ENCODE measurements at regions of chr3 and their contacts with region 1.

Region 1: DNA sequence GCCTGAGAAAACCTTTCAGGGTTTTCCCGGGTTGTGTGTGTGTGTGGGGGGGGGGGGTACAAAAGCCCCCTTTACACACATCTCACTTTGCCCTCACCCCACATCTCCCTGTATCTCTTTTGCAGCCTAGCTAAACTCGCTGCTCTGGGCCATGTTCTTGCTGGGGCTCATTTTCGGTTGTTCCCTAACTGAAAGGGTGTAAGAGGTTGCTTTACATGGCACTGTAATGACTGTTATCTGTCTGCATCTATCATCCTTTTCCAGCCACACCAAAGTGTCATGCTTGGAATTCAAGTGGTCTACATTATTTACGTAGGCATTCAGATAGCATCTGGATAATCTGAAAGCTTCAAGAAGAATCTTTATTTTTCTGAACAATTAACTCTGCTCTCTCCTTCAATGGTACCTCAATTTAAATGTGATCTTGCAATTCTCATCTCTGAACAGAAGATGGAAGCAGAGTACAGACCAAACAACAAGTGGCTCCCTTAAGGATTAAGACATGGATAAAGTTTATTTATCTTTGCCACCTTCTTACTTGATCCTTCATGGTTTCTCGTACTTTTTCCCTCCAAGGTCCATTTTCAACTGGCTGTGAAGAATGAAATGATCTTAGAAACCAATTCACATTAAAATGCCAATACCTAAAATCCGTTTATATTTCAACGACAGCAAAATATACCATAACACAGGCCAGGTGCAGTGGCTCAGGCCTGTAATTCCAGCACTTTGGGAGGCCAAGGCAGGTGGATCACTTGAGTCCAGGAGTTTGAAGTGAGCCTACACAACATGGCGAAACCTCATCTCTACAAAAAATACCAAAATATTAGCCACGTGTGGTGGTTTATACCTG is 34.9 kb downstream of the DCLK3 start:
- DNase-seq: no peak
- H3K4me3 ChIP-seq: no peak overlapping the region
- H3K27ac ChIP-seq: no peak overlapping the region
- H3K4me1 ChIP-seq: no peaks in the 10 kb centered on the region
- H3K27me3 ChIP-seq: no peaks in the 10 kb centered on the region
- CTCF ChIP-seq: peak; percentile 55 to 90 (median 78)
- POLR2A ChIP-seq: no peak

Region 2: DNA sequence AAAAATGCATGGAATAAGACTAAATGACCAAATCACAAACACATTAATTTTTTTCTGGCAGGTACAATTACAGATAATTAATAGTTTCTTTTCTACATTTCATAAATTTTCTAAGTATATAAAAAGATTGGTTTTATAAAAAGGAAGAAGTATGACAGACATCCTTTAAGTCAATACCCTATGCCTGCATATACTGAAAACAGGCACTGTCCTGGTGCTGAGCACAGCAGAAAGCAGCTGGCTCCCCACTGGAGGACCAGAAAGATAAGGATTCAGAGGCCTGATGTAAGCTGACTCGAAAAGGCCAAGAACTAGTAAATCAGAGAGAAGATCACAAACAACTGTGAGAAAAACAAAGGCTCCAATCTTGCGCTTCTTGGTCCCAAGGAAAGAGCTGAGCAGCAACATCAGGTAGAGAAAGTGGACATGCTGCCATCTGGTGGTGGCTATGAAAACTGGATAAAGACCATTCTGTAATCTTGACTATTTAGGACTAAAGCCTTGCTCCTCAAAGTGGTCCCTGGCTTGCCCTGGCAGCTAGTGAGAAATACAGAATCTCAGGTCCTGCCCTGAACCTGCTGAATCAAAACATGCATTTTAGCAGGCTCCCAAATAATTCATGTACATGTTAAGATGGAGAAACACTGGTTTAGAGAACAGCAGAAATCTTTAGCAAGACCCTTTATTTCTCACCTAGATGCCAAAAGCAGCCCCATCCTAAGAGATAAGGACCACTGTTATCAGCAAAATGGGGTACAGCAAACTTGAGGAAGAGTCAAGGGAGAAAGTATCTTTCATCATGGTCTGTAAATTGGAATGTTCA is 139.4 kb after region 1 on chr3:
- intact Hi-C with region 1: loop called in 1 of 2 experiments (anchors 5 kb)
- DNase-seq: peak; percentile 37 to 76 (median 49)
- H3K4me3 ChIP-seq: no peak overlapping the region
- H3K27ac ChIP-seq: no peak overlapping the region
- H3K4me1 ChIP-seq: no peaks in the 10 kb centered on the region
- H3K27me3 ChIP-seq: no peaks in the 10 kb centered on the region
- CTCF ChIP-seq: peak; percentile 57 to 79 (median 69)
- POLR2A ChIP-seq: no peak

Region 3: DNA sequence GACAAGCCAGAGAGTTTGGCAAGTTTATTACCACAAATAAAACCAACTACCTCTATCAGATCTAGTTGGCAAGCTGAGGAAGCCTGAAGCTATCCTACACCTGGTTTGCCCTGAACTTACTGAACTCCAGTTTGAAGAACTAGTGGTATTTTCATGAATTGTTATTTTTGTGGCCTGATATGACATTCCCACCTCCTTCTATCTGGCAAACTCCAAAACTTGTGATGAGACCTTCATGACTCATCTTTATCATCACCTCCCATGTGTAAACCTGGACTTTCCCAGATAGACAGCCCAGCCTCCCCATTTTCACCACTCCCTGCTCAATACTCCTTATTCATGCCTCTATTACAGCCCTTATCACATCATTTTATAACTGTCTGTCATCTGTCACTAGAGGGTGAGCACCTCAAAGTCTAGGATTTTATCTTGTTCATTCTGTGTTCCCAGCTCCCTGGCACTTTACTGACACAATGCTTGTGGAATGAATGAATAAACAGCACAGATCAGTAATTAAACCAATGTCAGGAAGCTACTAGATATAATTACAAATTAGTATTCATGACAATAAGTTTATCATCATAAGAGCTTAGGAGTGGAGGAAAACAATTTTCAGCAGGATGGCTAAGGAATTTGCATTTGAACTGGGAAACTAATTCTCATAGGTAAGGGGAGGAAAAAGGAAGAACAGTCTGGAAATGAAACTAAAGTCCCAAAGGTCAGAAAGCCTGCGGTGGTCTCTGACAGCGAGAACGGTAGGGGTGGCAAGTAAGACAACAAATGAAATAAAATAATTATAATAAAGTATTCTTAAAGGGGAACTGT is 228.6 kb after region 1 on chr3:
- intact Hi-C with region 1: loop called (anchors 5 to 10 kb)
- DNase-seq: peak in 1 of 7 donors; percentile 27
- H3K4me3 ChIP-seq: no peak overlapping the region
- H3K27ac ChIP-seq: no peak overlapping the region
- H3K4me1 ChIP-seq: no peaks in the 10 kb centered on the region
- H3K27me3 ChIP-seq: no peaks in the 10 kb centered on the region
- CTCF ChIP-seq: no peak
- POLR2A ChIP-seq: no peak

Region 4: GRCh38 chr3:37024092-37024491 is 294.7 kb after region 1 on chr3:
- intact Hi-C with region 1: no loop called
- DNase-seq: no peak
- H3K4me3 ChIP-seq: no peak overlapping the region
- H3K27ac ChIP-seq: no peak overlapping the region
- H3K4me1 ChIP-seq: peaks cover 0 to 5% of the 10 kb centered on the region in 2 donors
- H3K27me3 ChIP-seq: no peaks in the 10 kb centered on the region
- CTCF ChIP-seq: peak; percentile 26 to 59 (median 49)
- POLR2A ChIP-seq: no peak

Region 5: DNA sequence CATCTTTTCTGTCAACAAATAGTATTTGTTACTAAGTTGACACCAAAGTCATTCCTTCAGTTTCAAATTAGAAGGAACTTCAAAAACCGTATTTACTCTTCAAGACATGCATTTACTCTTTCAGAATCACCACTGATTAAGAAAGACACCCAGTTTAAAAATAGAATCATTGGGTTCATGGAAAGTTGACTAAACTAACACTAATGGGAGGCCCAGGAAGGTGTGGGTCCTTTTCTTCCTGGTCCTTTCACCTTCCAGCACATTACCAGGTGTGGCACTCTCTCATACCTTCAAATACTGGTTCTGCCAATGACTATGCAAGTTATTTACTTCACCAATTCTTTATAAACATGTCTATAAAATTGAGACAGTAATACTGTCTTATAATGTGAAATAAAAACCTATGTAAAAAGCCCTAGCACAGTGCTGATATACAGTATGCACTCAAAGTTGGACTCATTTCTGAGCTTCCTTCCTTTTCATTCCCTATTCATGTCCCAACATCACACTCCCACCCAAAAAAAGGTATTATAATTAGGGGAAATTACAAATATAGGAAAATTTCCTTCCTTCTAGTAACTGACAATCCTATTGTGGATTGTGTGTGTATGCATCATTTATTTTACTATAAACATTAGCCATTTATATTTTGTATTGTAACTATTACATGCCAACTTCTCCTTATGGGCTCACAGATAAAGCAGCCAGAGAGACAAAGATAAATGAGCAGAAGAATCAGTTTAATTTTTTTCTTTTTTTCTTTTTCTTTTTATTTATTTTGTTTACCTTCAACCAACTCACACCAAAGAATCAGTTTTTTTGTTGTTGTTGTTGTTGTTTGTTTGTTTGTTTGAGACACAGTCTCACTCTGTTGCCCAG is 396.0 kb after region 1 on chr3:
- intact Hi-C with region 1: no loop called
- DNase-seq: no peak
- H3K4me3 ChIP-seq: no peak overlapping the region
- H3K27ac ChIP-seq: no peak overlapping the region
- H3K4me1 ChIP-seq: peaks cover 7 to 18% of the 10 kb centered on the region in 2 donors
- H3K27me3 ChIP-seq: no peaks in the 10 kb centered on the region
- CTCF ChIP-seq: no peak
- POLR2A ChIP-seq: no peak

Region 6: GRCh38 chr3:37210230-37210629 is 480.8 kb after region 1 on chr3:
- intact Hi-C with region 1: loop called in 1 of 2 experiments (anchors 10 kb)
- DNase-seq: no peak
- H3K4me3 ChIP-seq: no peak overlapping the region
- H3K27ac ChIP-seq: no peak overlapping the region
- H3K4me1 ChIP-seq: no peaks in the 10 kb centered on the region
- H3K27me3 ChIP-seq: no peaks in the 10 kb centered on the region
- CTCF ChIP-seq: no peak
- POLR2A ChIP-seq: no peak